Endothelial cell of umbilical vein (primary cell): ENCODE measurements at regions of chrX and their contacts with region 1.

Region 1: DNA sequence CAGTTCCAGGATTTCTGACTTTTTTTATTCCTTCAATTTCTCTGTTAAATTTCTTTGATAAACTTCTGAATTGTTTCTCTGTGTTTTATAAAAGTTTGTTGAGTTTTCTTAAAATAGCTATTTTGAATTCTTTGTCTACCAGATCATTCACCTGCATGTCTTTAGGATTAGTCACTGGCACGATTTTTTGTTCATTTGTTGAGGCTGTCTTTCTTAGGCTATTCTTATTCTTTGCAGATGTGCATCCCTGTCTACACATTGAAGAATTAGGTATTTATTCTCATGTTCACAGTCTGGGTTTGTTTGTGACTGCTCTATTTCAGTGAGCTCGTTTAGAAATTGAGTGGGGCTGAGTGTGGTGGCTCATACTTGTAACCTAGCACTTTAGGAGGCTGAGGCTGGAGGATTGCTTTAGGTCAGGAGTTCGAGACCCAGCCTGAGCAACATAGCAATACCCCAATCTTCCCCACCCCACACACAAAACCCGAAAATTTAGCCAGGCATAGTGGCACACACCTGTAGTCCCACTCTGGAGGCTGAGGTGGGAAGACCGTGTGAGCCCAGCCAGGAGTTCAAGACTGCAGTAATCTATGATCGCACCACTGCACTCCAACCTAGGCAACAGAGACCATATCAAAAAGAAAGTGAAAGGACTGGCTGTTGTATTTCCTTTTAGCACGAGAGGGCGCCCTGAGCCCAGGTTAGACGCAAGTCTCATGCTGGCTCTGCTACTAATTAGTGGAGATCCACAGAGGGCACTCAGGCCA is 42.0 kb downstream of the F8 start:
- DNase-seq: peak; percentile 69
- H3K4me3 ChIP-seq: peak overlapping the region in 1 of 3 experiments; percentile 45
- H3K27ac ChIP-seq: no peak overlapping the region
- H3K4me1 ChIP-seq: peaks cover 3% of the 10 kb centered on the region
- H3K27me3 ChIP-seq: no peaks in the 10 kb centered on the region
- CTCF ChIP-seq: peak; percentile 37 to 42
- POLR2A ChIP-seq: no peak

Region 2: GRCh38 chrX:154967603-154968002 is 12.9 kb before region 1 on chrX:
- CTCF ChIA-PET with region 1: no interaction called
- POLR2A ChIA-PET with region 1: no interaction called
- dilution Hi-C with region 1: no loop called
- intact Hi-C with region 1: no loop called
- DNase-seq: peak; percentile 57
- H3K4me3 ChIP-seq: no peak overlapping the region
- H3K27ac ChIP-seq: no peak overlapping the region
- H3K4me1 ChIP-seq: peaks cover 12% of the 10 kb centered on the region
- H3K27me3 ChIP-seq: no peaks in the 10 kb centered on the region
- CTCF ChIP-seq: no peak
- POLR2A ChIP-seq: no peak

Region 3: DNA sequence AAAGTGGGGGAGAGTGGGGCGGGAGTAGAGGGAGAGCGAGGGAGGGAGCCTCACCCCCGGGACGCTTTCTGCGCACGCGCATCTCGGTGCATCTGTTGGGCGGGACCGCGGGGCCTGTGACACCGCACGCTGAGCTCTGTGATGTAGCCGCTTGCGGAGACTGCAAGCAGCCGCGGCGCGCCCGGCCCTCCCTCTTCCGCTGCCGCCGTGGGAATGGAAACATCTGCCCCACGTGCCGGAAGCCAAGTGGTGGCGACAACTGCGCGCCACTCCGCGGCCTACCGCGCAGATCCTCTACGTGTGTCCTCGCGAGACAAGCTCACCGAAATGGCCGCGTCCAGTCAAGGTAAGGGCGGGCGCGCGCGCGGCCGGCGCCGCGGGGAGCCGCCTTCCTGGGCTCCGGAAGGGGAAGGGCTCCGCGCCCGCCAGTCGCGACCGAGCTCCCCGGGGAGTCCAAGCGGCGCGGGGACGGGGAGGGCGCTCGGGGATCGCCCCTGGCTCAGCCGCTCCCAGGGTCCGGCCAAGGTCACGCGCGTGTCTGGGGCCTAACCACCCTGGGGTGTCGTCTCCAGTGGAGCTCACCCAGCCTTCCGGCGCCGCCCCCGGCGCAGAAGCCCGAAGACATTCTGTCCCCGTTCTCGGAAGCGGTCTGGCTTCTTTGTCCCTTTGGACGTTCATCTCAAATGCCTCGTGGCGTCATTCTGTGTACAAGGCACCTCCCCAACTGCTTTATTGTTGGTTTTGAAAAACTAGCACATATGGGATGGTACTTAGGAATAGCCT is 46.4 kb after region 1 on chrX and contains the start of gene FUNDC2:
- CTCF ChIA-PET with region 1: interaction called, 3 read pairs
- POLR2A ChIA-PET with region 1: no interaction called
- dilution Hi-C with region 1: no loop called
- intact Hi-C with region 1: loop called (anchors 2 kb)
- DNase-seq: peak; percentile 94
- H3K4me3 ChIP-seq: peak within 1 kb of the TSS; percentile 61 to 96 (median 82)
- H3K27ac ChIP-seq: peak within 1 kb of the TSS; percentile 96
- H3K4me1 ChIP-seq: no peaks in the 10 kb centered on the region
- H3K27me3 ChIP-seq: peaks cover 2% of the 10 kb centered on the region in 2 experiments
- CTCF ChIP-seq: no peak
- POLR2A ChIP-seq: no peak
- total RNA-seq, gene FUNDC2: 53.3 TPM in 2 replicates

Region 4: GRCh38 chrX:155132110-155132509 is 151.6 kb after region 1 on chrX:
- CTCF ChIA-PET with region 1: no interaction called
- POLR2A ChIA-PET with region 1: no interaction called
- dilution Hi-C with region 1: no loop called
- intact Hi-C with region 1: loop called (anchors 2 kb)
- DNase-seq: no peak
- H3K4me3 ChIP-seq: no peak overlapping the region
- H3K27ac ChIP-seq: no peak overlapping the region
- H3K4me1 ChIP-seq: no peaks in the 10 kb centered on the region
- H3K27me3 ChIP-seq: no peaks in the 10 kb centered on the region
- CTCF ChIP-seq: no peak
- POLR2A ChIP-seq: no peak

Region 5: GRCh38 chrX:155216179-155216939 is 235.8 kb after region 1 on chrX and contains the start of gene VBP1:
- CTCF ChIA-PET with region 1: interaction called, 10 read pairs
- POLR2A ChIA-PET with region 1: no interaction called
- dilution Hi-C with region 1: no loop called
- intact Hi-C with region 1: loop called (anchors 2 kb)
- DNase-seq: peak; percentile 95
- H3K4me3 ChIP-seq: peak within 1 kb of the TSS; percentile 79 to 97 (median 91)
- H3K27ac ChIP-seq: peak within 1 kb of the TSS; percentile 85
- H3K4me1 ChIP-seq: peaks cover 14% of the 10 kb centered on the region
- H3K27me3 ChIP-seq: no peaks in the 10 kb centered on the region
- CTCF ChIP-seq: peak; percentile 21 to 46
- POLR2A ChIP-seq: peak; percentile 51
- total RNA-seq, gene VBP1: 45.8 and 51.5 TPM in 2 replicates